AG04449 (cell line): ENCODE measurements at regions of chr3 and their contacts with region 1.

Region 1: DNA sequence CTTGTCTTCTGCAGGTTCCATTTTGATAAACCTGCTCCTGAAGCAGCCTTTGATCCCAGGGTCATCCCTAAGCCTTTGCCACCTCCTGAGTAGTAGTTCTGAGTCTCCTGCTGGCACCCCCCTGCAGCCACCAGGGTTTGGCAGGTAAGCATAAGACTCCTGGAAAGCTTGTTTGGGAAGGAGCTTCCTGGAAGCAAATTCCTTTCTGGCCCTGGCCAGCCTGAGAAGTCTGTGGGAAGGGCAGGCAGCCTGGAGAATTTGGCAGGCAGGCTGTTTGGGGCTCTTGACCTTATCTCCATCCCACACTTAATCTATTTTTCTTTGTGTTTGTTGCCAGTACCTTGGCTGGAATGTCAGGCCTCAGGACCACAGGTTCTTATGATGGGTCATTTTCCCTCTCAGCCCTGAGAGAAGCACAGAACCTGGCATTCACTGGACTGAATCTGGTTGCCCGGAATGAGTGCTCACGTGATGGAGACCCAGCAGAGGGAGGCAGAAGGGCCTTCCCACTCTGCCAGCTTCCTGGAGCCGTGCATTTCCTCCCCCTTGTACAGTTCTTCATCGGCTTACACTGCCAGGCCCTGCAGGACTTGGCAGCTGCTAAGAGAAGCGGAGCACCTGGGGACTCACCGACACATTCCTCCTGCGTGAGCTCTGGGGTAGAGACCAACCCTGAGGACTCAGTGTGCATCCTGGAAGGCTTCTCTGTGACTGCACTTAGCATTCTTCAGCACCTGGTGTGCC is 13.4 kb downstream of the ATRIP start:
- DNase-seq: no peak
- H3K4me3 ChIP-seq: no peak overlapping the region
- CTCF ChIP-seq: no peak

Region 2: DNA sequence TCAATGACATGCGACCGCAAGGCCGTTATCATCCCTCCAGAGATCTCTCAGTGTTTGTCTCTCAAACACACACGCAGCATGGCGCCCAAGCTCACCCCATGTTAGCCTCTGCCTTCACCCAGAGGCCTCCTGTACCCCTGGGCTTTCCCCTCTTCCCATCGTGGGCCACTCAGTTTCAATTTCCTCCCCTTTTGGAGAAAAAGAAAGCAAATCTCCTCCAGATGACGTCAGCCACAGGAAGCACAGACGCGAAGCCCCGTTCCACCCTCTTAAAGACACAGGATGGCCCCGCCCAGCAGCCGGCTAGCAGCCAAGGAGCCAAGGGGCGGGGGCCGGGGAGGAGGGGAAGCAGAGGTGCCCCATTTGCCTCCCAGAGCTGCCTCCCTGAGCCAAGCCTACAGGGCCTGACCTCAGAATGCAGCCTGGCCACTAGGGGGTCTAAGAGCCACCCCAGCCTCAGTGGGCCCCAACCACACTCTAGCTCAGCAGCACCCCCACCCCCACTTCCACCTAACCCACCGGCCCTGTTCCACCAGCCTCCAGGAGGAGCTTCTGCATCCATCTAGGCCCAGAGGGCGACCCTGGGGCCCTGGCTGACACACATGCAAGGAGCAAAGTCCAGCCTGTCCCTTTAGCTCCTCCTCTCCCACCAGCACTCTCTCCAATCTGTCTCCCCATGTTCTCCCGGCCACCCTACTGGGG is 13.1 kb after region 1 on chr3:
- CTCF ChIA-PET with region 1: interaction called, 10 read pairs
- POLR2A ChIA-PET with region 1: no interaction called
- DNase-seq: peak; percentile 45
- H3K4me3 ChIP-seq: peak overlapping the region; percentile 85
- CTCF ChIP-seq: peak; percentile 46